Head of caudate nucleus (tissue), 42 donors: ENCODE measurements at regions of chr4 and their contacts with region 1.

Region 1: DNA sequence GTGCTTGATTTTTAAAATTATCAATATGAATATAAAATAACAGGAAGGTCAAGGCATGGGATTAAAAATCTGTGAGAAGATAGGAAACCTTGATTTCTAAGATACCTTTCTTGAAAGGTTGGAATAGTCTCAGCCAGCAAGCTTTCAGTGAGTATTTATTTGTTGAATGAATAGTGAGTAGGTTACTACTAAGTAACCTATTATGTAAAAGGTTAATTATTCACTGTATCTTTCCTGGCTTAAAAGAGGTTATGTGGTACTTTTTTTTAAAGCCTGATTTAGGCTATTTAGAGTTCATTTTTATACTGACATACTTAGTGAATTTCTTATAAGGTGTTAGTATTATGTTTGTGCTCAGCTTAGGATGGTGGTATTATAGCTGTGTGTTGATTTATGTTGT is 123.5 kb downstream of the PTPN13 start:
- DNase-seq: no peak

Region 2: GRCh38 chr4:86344127-86344526 is 373.5 kb before region 1 on chr4:
- intact Hi-C with region 1: no loop called
- DNase-seq: no peak

Region 3: DNA sequence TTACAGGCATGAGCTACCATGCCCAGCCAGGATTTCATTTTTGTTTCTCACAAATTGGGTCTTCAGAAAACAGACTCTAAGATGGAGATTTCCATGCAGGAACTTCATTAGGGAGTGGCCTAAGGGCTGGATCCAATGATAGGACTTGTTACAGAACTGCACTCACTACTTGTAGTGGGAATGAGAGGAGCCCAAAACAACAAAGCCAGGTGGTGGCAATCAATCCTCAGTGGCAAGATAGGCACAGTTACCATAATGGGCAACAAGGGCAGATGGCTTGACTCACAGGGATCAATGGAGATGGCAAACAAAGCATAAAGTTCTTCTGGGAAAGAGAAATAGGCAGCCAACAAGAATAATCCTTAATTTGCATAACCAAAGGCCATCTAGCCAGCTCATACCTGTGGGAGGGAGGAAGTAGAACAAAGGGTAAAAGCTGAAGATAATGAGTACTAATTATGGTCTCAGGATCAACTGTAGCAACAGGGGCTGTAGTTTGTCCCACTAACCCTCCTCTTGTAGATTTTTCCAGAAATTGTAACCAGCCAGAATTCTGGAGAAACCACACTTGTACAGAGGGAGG is 285.0 kb before region 1 on chr4:
- intact Hi-C with region 1: no loop called
- DNase-seq: no peak

Region 4: GRCh38 chr4:86615501-86615900 is 102.2 kb before region 1 on chr4:
- intact Hi-C with region 1: loop called (anchors 10 kb)
- DNase-seq: no peak